Esophagus squamous epithelium (tissue), 5 donors: ENCODE measurements at regions of chr11 and their contacts with region 1.

Region 1: GRCh38 chr11:83162377-83162776 is 5.4 kb downstream of the PCF11 start:
- DNase-seq: no peak
- H3K4me3 ChIP-seq: peak overlapping the region in 2 of 4 donors; percentile 4 to 8
- H3K27ac ChIP-seq: peak overlapping the region in 3 of 4 donors; percentile 0 to 100 (median 100)
- H3K4me1 ChIP-seq: peaks cover 7 to 70% (median 20%) of the 10 kb centered on the region in 3 donors
- H3K27me3 ChIP-seq: no peaks in the 10 kb centered on the region
- CTCF ChIP-seq: no peak
- POLR2A ChIP-seq: no peak

Region 2: DNA sequence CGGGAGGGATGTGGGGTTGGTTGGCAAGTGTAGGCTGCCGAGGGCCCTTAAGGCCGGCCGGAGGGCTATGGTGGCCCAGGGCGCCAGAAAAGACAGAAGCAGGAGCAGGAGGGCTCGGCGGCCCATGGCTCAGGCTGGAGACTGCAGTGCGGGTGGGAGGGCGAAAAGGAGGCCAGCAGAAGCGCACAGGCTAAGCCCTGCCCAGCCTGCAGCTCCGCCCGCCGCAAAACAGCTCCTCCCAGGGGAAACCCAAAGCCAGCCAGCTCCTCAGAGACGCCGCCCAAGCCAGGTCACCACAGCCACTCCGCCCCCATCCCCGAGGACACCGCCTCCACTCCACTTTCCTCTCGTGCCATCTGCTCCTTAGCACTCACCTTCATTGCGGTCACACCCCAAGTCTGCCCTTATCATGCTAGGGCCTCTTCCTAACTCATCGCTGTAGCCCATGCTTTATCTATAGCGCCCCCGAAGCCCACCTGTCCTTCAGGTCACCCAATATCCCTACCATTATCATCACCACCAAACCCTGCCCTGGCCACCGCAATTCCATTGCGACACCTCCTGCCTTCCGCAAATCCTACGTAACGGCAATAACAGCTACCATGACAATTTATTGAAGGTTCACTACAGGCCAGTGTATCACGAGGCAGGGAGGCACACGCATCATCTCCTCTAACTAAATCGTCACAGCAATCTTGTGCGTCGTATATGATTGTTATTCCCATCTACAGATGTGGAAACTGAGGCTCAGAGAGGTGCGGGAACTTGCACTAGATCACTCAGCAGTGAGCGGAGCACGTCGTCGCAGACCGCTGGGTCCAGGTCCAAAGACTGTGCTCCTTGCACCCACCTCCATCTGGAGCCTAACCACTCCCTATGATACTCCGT is 261.9 kb before region 1 on chr11 and contains the start of gene PRCP:
- intact Hi-C with region 1: loop called (anchors 10 kb)
- DNase-seq: peak; percentile 54
- H3K4me3 ChIP-seq: peak within 1 kb of the TSS; percentile 62 to 82 (median 74)
- H3K27ac ChIP-seq: peak within 1 kb of the TSS; percentile 90 to 97 (median 97)
- H3K4me1 ChIP-seq: peaks cover 19 to 76% (median 24%) of the 10 kb centered on the region in 3 donors
- H3K27me3 ChIP-seq: no peaks in the 10 kb centered on the region
- CTCF ChIP-seq: peak in 3 of 6 experiments; percentile 1 to 14 (median 12)
- POLR2A ChIP-seq: peak in 3 of 4 donors; percentile 29 to 88 (median 73)
- total RNA-seq, gene PRCP: 39.6 to 82.4 (median 50.3) TPM

Region 3: GRCh38 chr11:83071567-83072349 is 90.6 kb before region 1 on chr11 and contains the start of gene RAB30:
- intact Hi-C with region 1: loop called (anchors 10 kb)
- DNase-seq: peak; percentile 95
- H3K4me3 ChIP-seq: peak within 1 kb of the TSS; percentile 56 to 91 (median 71)
- H3K27ac ChIP-seq: peak within 1 kb of the TSS; percentile 93 to 98 (median 94)
- H3K4me1 ChIP-seq: peaks cover 10 to 58% (median 31%) of the 10 kb centered on the region in 3 donors
- H3K27me3 ChIP-seq: no peaks in the 10 kb centered on the region
- CTCF ChIP-seq: peak in 1 of 6 experiments; percentile 10
- POLR2A ChIP-seq: peak in 3 of 4 donors; percentile 77 to 96 (median 83)
- total RNA-seq, gene RAB30: 2.2 to 8.7 (median 6.0) TPM

Region 4: DNA sequence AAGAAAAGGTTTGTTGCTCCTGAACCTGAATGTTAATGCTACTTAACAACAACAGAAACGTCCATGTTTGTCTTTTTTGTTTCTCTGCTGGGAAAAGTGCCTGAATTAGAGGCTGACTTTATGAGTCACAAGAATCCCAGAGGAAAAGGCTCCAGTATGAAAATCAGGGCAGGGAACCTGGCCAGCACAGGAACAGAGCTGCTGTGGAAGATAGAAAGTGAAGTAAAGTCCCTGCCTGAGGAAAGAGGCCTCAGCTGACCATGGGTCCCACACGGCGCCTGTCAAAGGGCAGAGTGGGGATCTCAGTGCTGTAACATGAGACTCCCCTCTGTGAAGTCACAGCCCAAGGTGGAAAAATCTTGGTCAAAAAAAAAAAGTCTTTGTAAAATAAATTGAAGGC is 756.1 kb after region 1 on chr11:
- intact Hi-C with region 1: no loop called
- DNase-seq: no peak
- H3K4me3 ChIP-seq: no peak overlapping the region
- H3K27ac ChIP-seq: no peak overlapping the region
- H3K4me1 ChIP-seq: no peaks in the 10 kb centered on the region
- H3K27me3 ChIP-seq: no peaks in the 10 kb centered on the region
- CTCF ChIP-seq: no peak
- POLR2A ChIP-seq: no peak